ENCODE measurements at regions of chr19 and their contacts with region 1.

Region 1: DNA sequence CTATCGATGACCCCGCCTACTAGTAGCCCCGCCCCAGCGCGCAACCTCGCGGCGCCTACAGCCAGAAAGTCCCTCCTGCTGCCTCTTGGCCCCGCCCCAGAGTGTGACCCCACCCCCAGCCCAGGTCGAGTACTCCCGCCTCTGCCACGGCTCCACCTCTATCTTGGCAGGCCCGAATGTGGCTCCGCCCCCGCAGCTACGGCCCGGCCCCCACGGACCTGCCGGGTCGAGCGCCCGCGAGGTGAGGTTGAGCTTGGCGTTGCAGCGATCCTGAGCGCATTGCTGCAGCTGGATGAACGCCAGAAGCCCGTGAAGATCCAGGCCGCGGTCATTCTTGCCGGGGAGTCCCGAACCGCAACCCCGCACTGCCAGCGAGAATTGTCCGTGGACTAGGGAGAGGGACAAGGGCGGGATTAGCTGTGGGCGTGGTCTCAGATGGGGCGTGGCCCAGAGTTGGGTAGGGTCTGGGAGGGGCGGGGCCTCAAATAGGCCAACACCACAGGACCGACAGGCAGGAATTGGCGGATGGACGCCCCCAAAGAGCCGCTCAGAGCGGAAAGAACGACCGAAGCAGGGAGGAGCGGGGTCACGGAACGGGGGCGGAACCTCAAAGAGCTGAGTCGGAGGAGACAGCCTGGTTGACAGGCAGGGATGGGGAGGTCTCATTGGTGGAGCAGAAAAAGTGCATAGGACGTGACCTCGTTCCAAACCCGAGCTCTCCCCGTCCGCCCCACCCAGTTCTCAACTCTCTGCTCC is 1.8 kb downstream of the LYPD3 start:
- DNase-seq: peak; percentile 99
- H3K4me3 Mint-ChIP-seq: peak overlapping the region; percentile 88
- H3K27ac Mint-ChIP-seq: peak overlapping the region; percentile 93
- H3K4me1 Mint-ChIP-seq: peaks cover 34% of the 10 kb centered on the region
- H3K27me3 Mint-ChIP-seq: peaks cover 12% of the 10 kb centered on the region

Region 2: GRCh38 chr19:43433358-43433673 is 30.2 kb before region 1 on chr19:
- CTCF ChIA-PET with region 1: interaction called, 21 read pairs
- POLR2A ChIA-PET with region 1: interaction called, 23 read pairs
- DNase-seq: no peak
- H3K4me3 Mint-ChIP-seq: no peak overlapping the region
- H3K27ac Mint-ChIP-seq: no peak overlapping the region
- H3K4me1 Mint-ChIP-seq: peaks cover 35% of the 10 kb centered on the region
- H3K27me3 Mint-ChIP-seq: peaks cover 2% of the 10 kb centered on the region

Region 3: DNA sequence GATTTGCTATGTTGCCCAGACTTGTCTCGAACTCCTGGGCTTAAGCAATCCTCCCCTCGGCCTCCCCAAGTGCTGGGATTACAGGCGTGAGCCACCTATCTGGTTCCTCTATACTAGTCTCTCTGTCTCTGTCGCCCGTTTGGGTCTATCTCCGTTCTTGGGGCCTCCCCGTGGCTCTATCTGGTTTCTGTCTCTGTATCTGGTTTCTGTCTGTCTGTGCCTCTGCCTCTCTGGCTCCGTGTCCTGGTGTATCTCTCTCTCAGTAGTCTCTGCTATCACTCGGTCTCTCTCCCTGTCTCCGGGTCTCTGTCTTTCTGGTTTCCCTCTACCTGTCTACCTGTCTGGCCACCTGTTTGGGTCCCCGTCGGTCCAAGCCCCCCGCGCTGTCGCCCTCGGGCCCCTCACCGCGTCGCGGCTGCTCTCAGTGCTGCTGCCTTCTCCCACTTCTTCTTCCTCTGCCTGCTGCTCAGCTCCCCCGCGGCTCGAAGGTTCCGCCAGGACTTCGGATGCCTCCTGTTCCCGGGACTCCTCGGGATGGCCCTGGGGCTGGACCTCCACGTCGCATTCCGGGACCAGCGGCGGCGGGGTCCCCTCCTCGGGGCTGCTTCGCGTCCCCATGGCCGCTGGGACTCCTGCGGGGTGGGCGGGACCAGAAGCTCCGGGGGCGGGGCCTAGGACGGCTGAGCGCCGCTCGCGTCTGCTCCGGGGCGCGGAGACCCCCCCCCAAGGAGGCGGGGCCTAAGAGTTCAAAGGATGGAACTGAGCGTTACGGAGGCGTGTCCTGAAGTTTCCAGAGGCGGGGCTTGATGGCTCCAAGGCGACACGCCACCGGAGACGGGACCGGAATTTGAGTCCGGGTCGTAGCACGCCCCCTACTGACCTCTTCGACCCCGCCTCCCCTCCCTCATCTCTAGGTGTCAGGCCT is 40.2 kb after region 1 on chr19:
- CTCF ChIA-PET with region 1: interaction called, 11 read pairs
- POLR2A ChIA-PET with region 1: interaction called, 13 read pairs
- DNase-seq: peak; percentile 98
- H3K4me3 Mint-ChIP-seq: peak overlapping the region; percentile 96
- H3K27ac Mint-ChIP-seq: peak overlapping the region; percentile 97
- H3K4me1 Mint-ChIP-seq: peaks cover 32% of the 10 kb centered on the region
- H3K27me3 Mint-ChIP-seq: no peaks in the 10 kb centered on the region

Region 4: GRCh38 chr19:43519436-43520088 is 56.0 kb after region 1 on chr19:
- CTCF ChIA-PET with region 1: interaction called, 34 read pairs
- POLR2A ChIA-PET with region 1: interaction called, 4 read pairs
- DNase-seq: peak; percentile 80
- H3K4me3 Mint-ChIP-seq: no peak overlapping the region
- H3K27ac Mint-ChIP-seq: no peak overlapping the region
- H3K4me1 Mint-ChIP-seq: peaks cover 19% of the 10 kb centered on the region
- H3K27me3 Mint-ChIP-seq: no peaks in the 10 kb centered on the region

Region 5: GRCh38 chr19:43532962-43533545 is 69.5 kb after region 1 on chr19 and contains the start of gene ZNF575:
- CTCF ChIA-PET with region 1: interaction called, 4 read pairs
- POLR2A ChIA-PET with region 1: interaction called, 12 read pairs
- DNase-seq: peak; percentile 89
- H3K4me3 Mint-ChIP-seq: peak within 1 kb of the TSS; percentile 86
- H3K27ac Mint-ChIP-seq: peak within 1 kb of the TSS; percentile 98
- H3K4me1 Mint-ChIP-seq: peaks cover 26% of the 10 kb centered on the region
- H3K27me3 Mint-ChIP-seq: no peaks in the 10 kb centered on the region
- total RNA-seq, gene ZNF575: 4.1 to 4.8 TPM

Region 6: DNA sequence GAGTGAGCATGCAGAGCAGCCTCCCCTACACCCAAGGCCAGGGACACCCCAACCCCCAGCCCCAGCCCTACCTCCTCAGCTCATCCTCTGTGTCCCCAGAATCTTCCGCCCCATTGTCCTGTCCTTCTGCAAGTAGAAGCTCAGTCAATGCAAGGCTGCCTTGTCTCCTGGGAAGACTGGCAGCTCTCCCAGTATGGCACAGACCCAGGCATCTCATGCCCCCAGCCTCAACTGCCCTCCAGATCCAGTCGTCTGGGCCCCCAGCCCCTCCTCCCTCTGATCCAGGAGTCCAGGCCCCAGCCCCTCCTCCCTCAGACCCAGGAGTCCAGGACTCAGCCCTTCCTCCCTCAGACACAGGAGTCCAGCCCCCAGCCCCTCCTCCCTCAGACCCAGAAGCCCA is 82.4 kb after region 1 on chr19:
- CTCF ChIA-PET with region 1: no interaction called
- POLR2A ChIA-PET with region 1: no interaction called
- DNase-seq: no peak
- H3K4me3 Mint-ChIP-seq: no peak overlapping the region
- H3K27ac Mint-ChIP-seq: no peak overlapping the region
- H3K4me1 Mint-ChIP-seq: no peaks in the 10 kb centered on the region
- H3K27me3 Mint-ChIP-seq: no peaks in the 10 kb centered on the region